ENCODE measurements at regions of chr17 and their contacts with region 1.

Region 1: GRCh38 chr17:49230636-49231562 is at the start of gene PHOSPHO1:
- DNase-seq: peak; percentile 81 to 97
- ATAC-seq: peak; percentile 84 to 93
- H3K4me3 ChIP-seq: peak within 1 kb of the TSS; percentile 62
- H3K27ac ChIP-seq: peak within 1 kb of the TSS; percentile 33 to 74; a peak in 5 of 6 replicates
- H3K4me1 ChIP-seq: peaks cover 16% of the 10 kb centered on the region
- CTCF ChIP-seq: no peak
- EP300 ChIP-seq: no peak
- POLR2A ChIP-seq: peak; percentile 26; the same call in 1 of the 2 replicates
- RAD21 ChIP-seq: no peak
- polyA plus RNA-seq, gene PHOSPHO1: 0.32 and 0.34 TPM in 2 replicates

Region 2: GRCh38 chr17:49038138-49038537 is 192.8 kb before region 1 on chr17:
- CTCF ChIA-PET with region 1: interaction called, 58 read pairs
- POLR2A ChIA-PET with region 1: no interaction called
- DNase-seq: no peak
- ATAC-seq: no peak
- H3K4me3 ChIP-seq: no peak overlapping the region
- H3K27ac ChIP-seq: no peak overlapping the region
- H3K4me1 ChIP-seq: no peaks in the 10 kb centered on the region
- CTCF ChIP-seq: no peak
- EP300 ChIP-seq: no peak
- POLR2A ChIP-seq: no peak
- RAD21 ChIP-seq: no peak

Region 3: GRCh38 chr17:49069585-49070273 is 161.2 kb before region 1 on chr17:
- CTCF ChIA-PET with region 1: interaction called, 12 read pairs
- POLR2A ChIA-PET with region 1: no interaction called
- DNase-seq: no peak
- ATAC-seq: no peak
- H3K4me3 ChIP-seq: no peak overlapping the region
- H3K27ac ChIP-seq: peak overlapping the region; percentile 34 to 51; a peak in 2 of 6 replicates
- H3K4me1 ChIP-seq: peaks cover 18% of the 10 kb centered on the region
- CTCF ChIP-seq: no peak
- EP300 ChIP-seq: no peak
- POLR2A ChIP-seq: no peak
- RAD21 ChIP-seq: no peak

Region 4: GRCh38 chr17:49117587-49118230 is 113.2 kb before region 1 on chr17:
- CTCF ChIA-PET with region 1: interaction called, 12 read pairs
- POLR2A ChIA-PET with region 1: no interaction called
- DNase-seq: no peak
- ATAC-seq: no peak
- H3K4me3 ChIP-seq: no peak overlapping the region
- H3K27ac ChIP-seq: 0 out of 6 replicates have a peak overlapping the region, but pooled peaks of 1 of the 2 experiments have one; percentile 6
- H3K4me1 ChIP-seq: no peaks in the 10 kb centered on the region
- CTCF ChIP-seq: no peak
- EP300 ChIP-seq: no peak
- POLR2A ChIP-seq: no peak
- RAD21 ChIP-seq: no peak

Region 5: GRCh38 chr17:49191917-49192741 is 38.8 kb before region 1 on chr17:
- CTCF ChIA-PET with region 1: interaction called, 224 read pairs
- POLR2A ChIA-PET with region 1: no interaction called
- DNase-seq: peak; percentile 75 to 98
- ATAC-seq: peak; percentile 75 to 77
- H3K4me3 ChIP-seq: peak overlapping the region; percentile 64
- H3K27ac ChIP-seq: peak overlapping the region; percentile 93 to 96
- H3K4me1 ChIP-seq: peaks cover 13% of the 10 kb centered on the region
- CTCF ChIP-seq: peak; percentile 70
- EP300 ChIP-seq: peak in 1 of 2 experiments; percentile 11; a peak in 1 of 5 replicates
- POLR2A ChIP-seq: peak; percentile 29
- RAD21 ChIP-seq: peak; percentile 40 to 66

Region 6: GRCh38 chr17:49260011-49260921 is 29.4 kb after region 1 on chr17:
- CTCF ChIA-PET with region 1: interaction called, 31 read pairs
- POLR2A ChIA-PET with region 1: no interaction called
- DNase-seq: peak; percentile 83 to 85
- ATAC-seq: peak; percentile 91 to 92
- H3K4me3 ChIP-seq: peak overlapping the region; percentile 61
- H3K27ac ChIP-seq: peak overlapping the region; percentile 81 to 88
- H3K4me1 ChIP-seq: peaks cover 9% of the 10 kb centered on the region; the same call in 2 of the 3 replicates
- CTCF ChIP-seq: no peak
- EP300 ChIP-seq: no peak
- POLR2A ChIP-seq: peak; percentile 29; the same call in 1 of the 2 replicates
- RAD21 ChIP-seq: no peak

Measured in A549 (cell line).